ENCODE measurements at regions of chr1 and their contacts with region 1.

Region 1: DNA sequence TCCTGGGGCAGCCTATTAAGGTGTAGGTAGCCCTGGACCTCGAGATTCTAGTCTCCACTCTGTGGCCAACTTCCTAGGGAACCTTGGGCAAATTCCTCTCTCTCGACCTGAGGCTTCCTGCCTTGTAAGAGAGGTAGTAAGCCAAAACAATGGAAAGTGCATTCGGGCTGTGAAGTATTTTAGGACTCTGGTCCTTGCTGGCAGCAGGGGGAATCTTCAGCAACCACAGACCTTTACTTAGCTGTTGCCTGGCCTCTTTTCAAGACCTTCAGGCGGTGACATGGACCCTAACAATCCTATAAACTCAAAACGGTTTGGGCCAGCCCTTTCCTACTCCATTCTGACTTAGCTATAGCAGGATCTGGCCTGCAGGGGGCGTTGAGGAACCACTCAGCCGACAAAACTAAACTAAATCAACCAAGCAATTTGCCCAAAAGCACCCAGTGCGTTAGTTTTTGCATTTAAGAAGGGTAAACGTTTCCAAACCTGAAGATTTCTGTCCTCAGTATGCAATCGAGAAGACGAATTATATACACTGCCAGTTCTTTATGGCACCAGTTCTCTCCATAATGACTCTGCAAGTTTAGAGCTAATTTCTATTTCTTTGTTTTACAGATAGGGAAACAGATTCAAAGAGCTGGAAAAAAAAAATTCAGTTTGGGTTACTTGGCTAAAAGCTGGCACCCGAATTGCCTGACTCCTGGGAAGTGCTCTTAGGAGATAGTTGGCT is 10.9 kb upstream of the SESN2 start:
- DNase-seq: peak; percentile 71 to 82
- ATAC-seq: peak; percentile 13 to 81 (median 58)
- H3K4me3 ChIP-seq: peak overlapping the region in 7 of 10 donors; percentile 2 to 32 (median 14)
- H3K27ac ChIP-seq: peak overlapping the region; percentile 42 to 92 (median 86)
- H3K4me1 ChIP-seq: peaks cover 15 to 69% (median 23%) of the 10 kb centered on the region in 9 donors
- H3K27me3 ChIP-seq: no peaks in the 10 kb centered on the region
- CTCF ChIP-seq: peak; percentile 75 to 96 (median 93)

Region 2: GRCh38 chr1:26833432-26834405 is 1414.7 kb before region 1 on chr1:
- intact Hi-C with region 1: no loop called
- DNase-seq: no peak
- ATAC-seq: peak in 7 of 8 donors; percentile 35 to 55 (median 41)
- H3K4me3 ChIP-seq: peak overlapping the region in 1 of 10 donors; percentile 2
- H3K27ac ChIP-seq: peak overlapping the region in 2 of 10 donors; percentile 36 to 88
- H3K4me1 ChIP-seq: peaks cover 2 to 47% (median 14%) of the 10 kb centered on the region in 9 donors
- H3K27me3 ChIP-seq: no peaks in the 10 kb centered on the region
- CTCF ChIP-seq: peak in 1 of 9 donors; percentile 14

Region 3: GRCh38 chr1:28329395-28330153 is 81.1 kb after region 1 on chr1:
- intact Hi-C with region 1: loop called in 4 of 10 experiments (anchors 1 to 5 kb)
- DNase-seq: peak in 1 of 2 donors; percentile 14
- ATAC-seq: peak in 5 of 8 donors; percentile 21 to 60 (median 32)
- H3K4me3 ChIP-seq: peak overlapping the region; percentile 46 to 88 (median 67)
- H3K27ac ChIP-seq: peak overlapping the region; percentile 30 to 93 (median 84)
- H3K4me1 ChIP-seq: peaks cover 3 to 31% (median 13%) of the 10 kb centered on the region in 9 donors
- H3K27me3 ChIP-seq: no peaks in the 10 kb centered on the region
- CTCF ChIP-seq: no peak

Region 4: DNA sequence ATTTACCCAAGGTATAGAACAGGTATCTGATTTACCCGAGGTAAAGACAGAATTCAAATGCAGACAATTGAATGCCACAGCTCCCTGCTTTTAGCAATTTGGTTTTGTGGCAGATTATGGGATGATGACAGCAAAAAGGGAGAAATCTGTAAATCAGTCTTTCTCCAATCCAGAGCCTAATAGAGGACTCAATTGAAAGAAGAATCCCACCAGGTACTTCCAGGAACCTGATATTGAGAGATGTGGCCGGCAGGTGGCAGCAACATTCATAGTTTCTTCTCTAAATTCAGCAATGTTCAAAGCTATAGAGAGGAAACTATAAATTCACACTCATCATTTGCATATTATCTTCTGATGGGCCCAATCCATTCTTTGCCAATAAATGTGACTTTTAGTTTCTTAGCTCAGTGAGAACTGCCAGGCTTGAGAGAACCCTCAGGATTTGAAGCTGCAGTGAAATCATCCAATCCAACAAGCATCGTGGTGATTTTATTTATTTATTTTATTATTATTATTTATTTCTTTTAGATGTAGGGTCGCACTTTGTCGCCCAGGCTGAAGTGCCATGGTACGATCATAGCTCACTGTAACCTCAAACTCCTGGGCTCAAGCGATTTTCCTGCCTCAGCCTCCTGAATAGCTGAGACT is 111.3 kb after region 1 on chr1:
- intact Hi-C with region 1: loop called in 1 of 10 experiments (anchors 2 kb)
- DNase-seq: peak; percentile 54 to 65
- ATAC-seq: peak in 2 of 8 donors; percentile 58 to 67
- H3K4me3 ChIP-seq: no peak overlapping the region
- H3K27ac ChIP-seq: no peak overlapping the region
- H3K4me1 ChIP-seq: peaks cover 0 to 5% (median 0%) of the 10 kb centered on the region in 9 donors
- H3K27me3 ChIP-seq: no peaks in the 10 kb centered on the region
- CTCF ChIP-seq: peak; percentile 42 to 79 (median 74)

Region 5: DNA sequence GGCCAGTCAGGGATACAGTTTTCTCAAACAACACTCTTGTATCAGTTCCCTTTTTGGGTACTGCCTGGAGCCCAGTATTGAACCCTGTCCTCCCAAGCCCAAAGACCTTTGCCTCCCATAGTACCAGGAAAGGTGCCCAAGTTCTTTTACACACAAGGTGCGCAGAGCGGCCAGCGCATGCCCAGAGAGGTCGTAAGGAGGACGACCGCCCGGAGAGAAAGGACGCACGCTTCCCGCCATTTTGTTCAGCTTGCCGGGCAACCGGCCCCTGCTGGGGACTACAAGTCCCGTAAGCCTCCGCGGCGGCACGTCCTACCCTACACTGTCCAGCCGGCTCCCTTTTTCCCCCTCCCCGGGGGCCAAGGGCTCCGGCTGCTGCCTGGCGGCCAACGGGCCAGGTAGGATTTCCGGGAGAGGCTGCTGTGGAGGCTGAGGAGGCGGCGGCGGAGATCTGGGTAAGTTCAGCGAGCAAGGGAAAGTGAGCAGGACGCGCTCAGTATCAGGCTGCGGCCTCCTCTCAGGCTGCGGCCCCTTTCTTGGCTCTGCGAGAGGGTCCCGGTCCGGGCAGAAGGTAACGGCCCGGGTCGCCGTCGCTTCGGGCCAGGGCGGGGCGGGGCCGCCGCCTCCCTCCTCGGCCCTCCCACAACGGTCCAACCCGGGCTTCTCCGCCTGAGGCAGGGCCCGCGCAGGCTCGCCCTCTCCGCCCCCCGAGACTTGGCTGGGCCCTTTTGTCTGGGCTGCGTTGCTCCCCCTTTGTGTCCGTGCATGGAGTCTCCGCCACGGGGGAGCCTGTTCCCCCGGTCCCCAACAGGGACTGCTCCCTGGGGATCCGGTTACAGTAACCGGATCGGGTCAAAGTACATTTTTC is 121.2 kb after region 1 on chr1 and contains the start of gene PHACTR4:
- intact Hi-C with region 1: loop called in 1 of 10 experiments (anchors 2 kb)
- DNase-seq: peak; percentile 92 to 93
- ATAC-seq: peak; percentile 98 to 99 (median 99)
- H3K4me3 ChIP-seq: peak within 1 kb of the TSS; percentile 51 to 98 (median 80)
- H3K27ac ChIP-seq: peak within 1 kb of the TSS; percentile 76 to 98 (median 93)
- H3K4me1 ChIP-seq: peaks cover 0 to 32% (median 18%) of the 10 kb centered on the region in 9 donors
- H3K27me3 ChIP-seq: no peaks in the 10 kb centered on the region
- CTCF ChIP-seq: peak in 1 of 9 donors; percentile 12
- total RNA-seq, gene PHACTR4: 14.0 to 24.9 (median 18.5) TPM

Region 6: DNA sequence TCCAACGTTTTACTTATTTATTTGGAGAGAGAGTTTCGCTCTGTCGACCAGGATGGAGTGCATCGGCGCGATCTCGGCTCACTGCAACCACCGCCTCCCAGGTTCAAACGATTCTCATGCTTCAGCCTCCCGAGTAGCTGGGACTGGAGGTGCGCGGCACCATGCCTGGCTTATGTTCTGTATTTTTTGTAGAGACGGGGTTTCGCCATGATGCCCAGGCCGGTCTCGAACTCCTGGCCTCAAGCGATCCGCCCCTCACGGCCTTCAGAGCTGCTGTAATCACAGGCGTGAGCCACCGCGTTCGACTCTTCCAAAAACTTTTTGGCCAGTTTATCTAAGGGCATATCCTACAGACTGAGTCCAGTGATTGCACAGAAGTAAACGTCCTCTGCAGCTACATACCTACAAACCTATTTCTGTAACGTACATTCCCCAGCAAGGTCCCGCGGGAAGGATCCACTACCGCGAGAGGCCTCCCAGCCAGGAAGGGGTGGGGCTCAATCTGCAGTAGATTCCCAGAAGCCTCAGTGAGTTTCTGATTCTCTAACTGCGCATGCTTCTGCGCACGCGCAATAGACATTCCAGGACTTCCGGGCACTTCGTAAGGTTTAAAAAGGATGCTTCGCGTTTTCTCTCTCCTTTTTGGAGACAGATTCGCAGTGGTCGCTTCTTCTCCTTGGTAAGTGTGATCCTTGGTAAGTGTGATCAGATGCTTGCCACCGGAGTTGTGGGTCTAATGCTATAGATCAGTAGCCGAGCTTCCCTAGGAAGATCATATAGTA is 257.1 kb after region 1 on chr1 and contains the start of gene RCC1:
- intact Hi-C with region 1: loop called in 3 of 10 experiments (anchors 5 kb)
- DNase-seq: peak; percentile 93 to 98
- ATAC-seq: peak; percentile 96 to 99 (median 98)
- H3K4me3 ChIP-seq: peak within 1 kb of the TSS; percentile 54 to 90 (median 78)
- H3K27ac ChIP-seq: peak within 1 kb of the TSS; percentile 21 to 95 (median 87)
- H3K4me1 ChIP-seq: peaks cover 9 to 48% (median 42%) of the 10 kb centered on the region in 9 donors
- H3K27me3 ChIP-seq: no peaks in the 10 kb centered on the region
- CTCF ChIP-seq: no peak
- total RNA-seq, gene RCC1: 2.3 to 17.8 (median 3.9) TPM

Region 7: DNA sequence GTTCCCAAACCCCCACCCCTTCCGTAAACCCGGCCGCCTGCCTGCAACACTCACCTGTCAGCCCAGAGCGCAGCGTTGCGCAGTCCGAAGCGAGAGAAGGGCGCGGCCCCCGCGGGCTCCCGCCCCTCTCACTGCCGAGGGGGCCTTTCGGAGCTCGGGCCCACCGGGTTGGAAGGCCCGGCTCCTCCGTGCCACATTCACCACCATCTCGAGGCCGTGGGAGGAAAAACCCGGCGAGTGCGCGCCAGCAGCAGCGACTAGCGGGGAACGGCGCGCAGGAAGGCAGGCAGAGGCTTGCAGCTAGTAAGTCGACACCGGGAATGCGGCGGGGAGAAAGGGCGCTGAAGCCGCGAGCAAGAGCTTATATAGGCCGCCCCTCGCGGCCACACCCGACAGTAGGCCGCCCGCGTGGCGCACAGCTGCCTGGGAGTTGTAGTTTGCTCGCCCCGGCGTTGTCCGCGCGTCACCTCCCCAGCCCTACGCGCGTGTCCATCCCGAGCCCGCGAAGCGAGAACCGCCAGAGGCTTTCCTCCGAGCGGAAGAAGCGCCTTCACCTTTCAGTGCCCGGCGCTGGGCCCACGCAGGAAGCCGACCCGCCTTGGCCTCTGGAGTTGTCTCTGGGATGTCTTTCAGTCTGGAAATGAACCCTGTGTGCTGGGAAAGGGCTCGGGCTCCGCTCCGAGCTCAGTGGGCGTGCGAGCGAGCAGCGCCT is 333.2 kb after region 1 on chr1:
- intact Hi-C with region 1: loop called in 1 of 10 experiments (anchors 10 kb)
- DNase-seq: peak; percentile 94 to 95
- ATAC-seq: peak; percentile 98 to 99 (median 99)
- H3K4me3 ChIP-seq: peak overlapping the region; percentile 73 to 98 (median 90)
- H3K27ac ChIP-seq: peak overlapping the region; percentile 72 to 94 (median 87)
- H3K4me1 ChIP-seq: peaks cover 0 to 48% (median 26%) of the 10 kb centered on the region in 9 donors
- H3K27me3 ChIP-seq: no peaks in the 10 kb centered on the region
- CTCF ChIP-seq: peak in 2 of 9 donors; percentile 0 to 29

Region 8: DNA sequence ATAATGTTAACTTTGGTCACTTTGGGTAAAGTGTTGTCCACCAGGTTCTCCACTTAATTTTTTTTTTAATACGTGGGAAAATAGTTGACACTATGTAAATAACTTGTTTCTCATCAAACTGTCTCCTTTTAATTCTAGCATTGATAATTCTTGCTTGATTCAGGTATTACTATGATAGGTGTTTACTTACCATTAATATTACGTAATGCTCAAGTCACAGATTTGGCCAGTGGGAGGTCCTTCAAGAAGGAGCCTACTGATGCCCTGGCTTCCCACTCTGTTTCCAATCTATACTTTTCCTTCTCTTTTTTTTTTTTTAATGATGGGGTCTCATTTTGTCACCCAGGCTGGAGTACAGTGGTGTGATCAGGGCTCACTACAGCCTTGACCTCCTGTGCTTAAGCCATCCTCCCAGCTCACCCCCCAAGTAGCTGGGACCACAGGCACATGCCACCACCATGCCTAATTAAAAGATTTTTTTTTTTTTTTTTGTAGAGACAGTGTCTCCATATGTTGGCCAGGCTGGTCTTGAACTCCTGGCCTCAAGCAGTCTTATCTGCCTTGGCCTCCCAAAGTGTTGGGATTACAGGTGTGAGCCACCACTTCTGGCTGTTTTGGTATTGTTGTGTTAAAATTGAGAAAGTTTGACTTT is 518.2 kb after region 1 on chr1:
- intact Hi-C with region 1: no loop called
- DNase-seq: no peak
- ATAC-seq: no peak
- H3K4me3 ChIP-seq: no peak overlapping the region
- H3K27ac ChIP-seq: no peak overlapping the region
- H3K4me1 ChIP-seq: peaks cover 0 to 10% (median 0%) of the 10 kb centered on the region in 9 donors
- H3K27me3 ChIP-seq: no peaks in the 10 kb centered on the region
- CTCF ChIP-seq: no peak

Measured in heart right ventricle (tissue), 16 donors.